Endothelial cell of umbilical vein (primary cell): ENCODE measurements at regions of chr6 and their contacts with region 1.

Region 1: DNA sequence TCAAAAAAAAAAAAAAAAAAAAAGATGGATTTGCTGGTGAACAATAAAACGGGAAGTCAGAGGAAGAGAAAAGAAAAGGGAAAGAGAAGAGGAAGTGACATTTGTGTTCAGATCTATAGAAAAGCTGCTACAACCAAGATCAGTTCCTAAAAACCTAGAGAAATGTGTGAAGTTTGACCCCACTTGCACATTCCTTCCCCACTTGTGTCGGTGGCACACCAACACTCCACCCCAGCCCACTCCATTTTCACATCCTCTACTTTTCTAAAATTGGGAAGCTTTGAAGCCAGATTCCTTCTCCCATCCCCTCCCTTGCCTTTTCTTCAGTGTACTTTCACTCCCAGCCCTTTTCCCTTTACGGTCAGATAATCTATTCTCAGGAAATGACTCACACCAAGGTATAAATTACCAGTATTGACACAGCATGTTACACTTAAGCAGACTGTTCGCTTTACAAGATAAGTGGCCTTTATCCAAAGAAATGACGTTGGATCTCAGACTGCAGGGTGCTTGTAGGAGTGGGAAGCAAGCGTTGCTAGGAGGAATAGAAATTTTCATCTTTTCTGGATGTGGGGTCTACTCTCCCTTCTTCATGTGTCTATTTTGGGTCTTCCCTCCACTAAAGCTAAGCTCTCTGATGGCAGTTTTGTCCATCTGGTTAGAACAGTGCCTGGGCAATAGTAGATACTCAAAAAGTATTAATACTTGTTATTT is 92.5 kb upstream of the ADGRF1 start:
- DNase-seq: peak; percentile 92
- H3K4me3 ChIP-seq: peak overlapping the region in 1 of 3 experiments; percentile 34
- H3K27ac ChIP-seq: peak overlapping the region; percentile 94
- H3K4me1 ChIP-seq: peaks cover 26% of the 10 kb centered on the region
- H3K27me3 ChIP-seq: no peaks in the 10 kb centered on the region
- CTCF ChIP-seq: no peak
- POLR2A ChIP-seq: no peak

Region 2: GRCh38 chr6:47242483-47243386 is 108.1 kb after region 1 on chr6:
- CTCF ChIA-PET with region 1: interaction called, 3 read pairs
- POLR2A ChIA-PET with region 1: no interaction called
- dilution Hi-C with region 1: no loop called
- intact Hi-C with region 1: loop called (anchors 1 kb)
- DNase-seq: peak; percentile 95
- H3K4me3 ChIP-seq: no peak overlapping the region
- H3K27ac ChIP-seq: peak overlapping the region; percentile 51
- H3K4me1 ChIP-seq: peaks cover 14% of the 10 kb centered on the region
- H3K27me3 ChIP-seq: no peaks in the 10 kb centered on the region
- CTCF ChIP-seq: no peak
- POLR2A ChIP-seq: no peak

Region 3: GRCh38 chr6:47264775-47265184 is 130.1 kb after region 1 on chr6:
- CTCF ChIA-PET with region 1: interaction called, 4 read pairs
- POLR2A ChIA-PET with region 1: no interaction called
- dilution Hi-C with region 1: no loop called
- intact Hi-C with region 1: loop called (anchors 1 kb)
- DNase-seq: peak; percentile 97
- H3K4me3 ChIP-seq: no peak overlapping the region
- H3K27ac ChIP-seq: peak overlapping the region; percentile 76
- H3K4me1 ChIP-seq: peaks cover 63% of the 10 kb centered on the region
- H3K27me3 ChIP-seq: no peaks in the 10 kb centered on the region
- CTCF ChIP-seq: no peak
- POLR2A ChIP-seq: no peak

Region 4: DNA sequence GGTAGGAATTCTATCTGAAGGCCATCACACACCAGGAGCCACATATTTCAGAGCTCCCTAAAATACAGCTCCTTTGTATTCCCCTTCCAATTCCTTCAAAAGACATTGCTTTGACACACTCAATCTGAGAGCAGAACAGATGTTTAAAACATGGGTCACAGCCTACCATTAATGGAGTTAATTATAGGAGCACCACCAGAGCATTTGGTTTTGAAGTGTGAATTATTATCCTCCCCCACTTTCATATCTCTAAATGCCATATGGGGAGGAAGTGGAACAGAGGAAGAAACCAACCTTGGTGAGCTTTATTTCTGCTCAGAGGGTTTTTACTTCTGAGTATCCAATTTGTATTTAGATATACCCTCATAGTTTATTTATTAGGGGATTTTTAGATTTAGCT is 225.8 kb after region 1 on chr6:
- CTCF ChIA-PET with region 1: no interaction called
- POLR2A ChIA-PET with region 1: no interaction called
- dilution Hi-C with region 1: no loop called
- intact Hi-C with region 1: no loop called
- DNase-seq: no peak
- H3K4me3 ChIP-seq: no peak overlapping the region
- H3K27ac ChIP-seq: no peak overlapping the region
- H3K4me1 ChIP-seq: no peaks in the 10 kb centered on the region
- H3K27me3 ChIP-seq: peaks cover 0 to 2% of the 10 kb centered on the region in 2 experiments
- CTCF ChIP-seq: no peak
- POLR2A ChIP-seq: no peak

Region 5: DNA sequence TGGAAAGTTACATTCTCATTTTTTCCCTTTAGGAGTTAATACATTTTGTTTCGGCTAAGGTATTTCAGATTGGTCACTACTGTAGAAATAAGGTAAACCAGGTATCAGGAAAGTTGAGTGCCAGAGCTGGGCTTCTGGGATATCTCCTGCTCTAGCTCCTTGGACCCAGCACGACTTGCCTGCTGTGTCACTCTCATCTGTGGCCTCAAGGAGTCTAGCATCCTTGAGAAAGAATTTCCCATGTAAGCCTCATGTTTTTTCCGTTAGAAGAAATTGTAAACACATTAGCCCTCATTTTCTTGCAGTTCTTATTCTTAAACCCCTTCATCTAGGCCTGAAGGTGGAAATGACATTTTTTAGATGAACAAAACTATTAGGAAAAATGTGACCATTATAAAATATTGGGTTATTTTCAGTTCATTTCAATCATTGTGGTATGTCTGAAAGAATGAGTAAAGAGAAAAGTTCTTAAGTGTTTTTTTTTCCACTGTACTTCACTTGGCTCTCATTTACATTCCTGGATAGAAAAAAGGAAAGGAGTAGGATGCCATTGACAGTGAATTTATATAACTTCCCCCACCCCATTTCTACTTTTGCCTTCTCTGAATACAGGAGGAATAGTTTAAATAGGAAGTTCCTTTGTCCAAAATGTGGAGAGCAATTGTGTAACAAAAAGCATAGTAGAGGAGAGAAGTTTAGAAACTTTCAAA is 389.7 kb after region 1 on chr6:
- CTCF ChIA-PET with region 1: no interaction called
- POLR2A ChIA-PET with region 1: no interaction called
- dilution Hi-C with region 1: no loop called
- intact Hi-C with region 1: no loop called
- DNase-seq: peak; percentile 27
- H3K4me3 ChIP-seq: no peak overlapping the region
- H3K27ac ChIP-seq: no peak overlapping the region
- H3K4me1 ChIP-seq: peaks cover 16% of the 10 kb centered on the region
- H3K27me3 ChIP-seq: no peaks in the 10 kb centered on the region
- CTCF ChIP-seq: no peak
- POLR2A ChIP-seq: no peak